Panc1 (cell line): ENCODE measurements at regions of chrX and their contacts with region 1.

Region 1: DNA sequence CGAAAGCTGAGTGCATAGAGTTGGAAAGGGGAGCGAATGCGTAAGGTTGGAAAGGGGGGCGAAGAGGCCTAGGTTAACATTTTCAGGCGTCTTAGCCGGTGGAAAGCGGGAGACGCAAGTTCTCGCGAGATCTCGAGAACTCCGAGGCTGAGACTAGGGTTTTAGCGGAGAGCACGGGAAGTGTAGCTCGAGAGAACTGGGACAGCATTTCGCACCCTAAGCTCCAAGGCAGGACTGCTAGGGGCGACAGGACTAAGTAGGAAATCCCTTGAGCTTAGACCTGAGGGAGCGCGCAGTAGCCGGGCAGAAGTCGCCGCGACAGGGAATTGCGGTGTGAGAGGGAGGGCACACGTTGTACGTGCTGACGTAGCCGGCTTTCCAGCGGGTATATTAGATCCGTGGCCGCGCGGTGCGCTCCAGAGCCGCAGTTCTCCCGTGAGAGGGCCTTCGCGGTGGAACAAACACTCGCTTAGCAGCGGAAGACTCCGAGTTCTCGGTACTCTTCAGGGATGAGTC is at the start of gene DDX3X:
- DNase-seq: peak; percentile 64
- ATAC-seq: peak; percentile 69
- H3K4me3 ChIP-seq: peak within 1 kb of the TSS; percentile 60 to 78
- H3K27ac ChIP-seq: peak within 1 kb of the TSS; percentile 97
- H3K4me1 ChIP-seq: peaks cover 11% of the 10 kb centered on the region
- H3K27me3 ChIP-seq: no peaks in the 10 kb centered on the region
- CTCF ChIP-seq: no peak
- total RNA-seq, gene DDX3X: 266 TPM

Region 2: DNA sequence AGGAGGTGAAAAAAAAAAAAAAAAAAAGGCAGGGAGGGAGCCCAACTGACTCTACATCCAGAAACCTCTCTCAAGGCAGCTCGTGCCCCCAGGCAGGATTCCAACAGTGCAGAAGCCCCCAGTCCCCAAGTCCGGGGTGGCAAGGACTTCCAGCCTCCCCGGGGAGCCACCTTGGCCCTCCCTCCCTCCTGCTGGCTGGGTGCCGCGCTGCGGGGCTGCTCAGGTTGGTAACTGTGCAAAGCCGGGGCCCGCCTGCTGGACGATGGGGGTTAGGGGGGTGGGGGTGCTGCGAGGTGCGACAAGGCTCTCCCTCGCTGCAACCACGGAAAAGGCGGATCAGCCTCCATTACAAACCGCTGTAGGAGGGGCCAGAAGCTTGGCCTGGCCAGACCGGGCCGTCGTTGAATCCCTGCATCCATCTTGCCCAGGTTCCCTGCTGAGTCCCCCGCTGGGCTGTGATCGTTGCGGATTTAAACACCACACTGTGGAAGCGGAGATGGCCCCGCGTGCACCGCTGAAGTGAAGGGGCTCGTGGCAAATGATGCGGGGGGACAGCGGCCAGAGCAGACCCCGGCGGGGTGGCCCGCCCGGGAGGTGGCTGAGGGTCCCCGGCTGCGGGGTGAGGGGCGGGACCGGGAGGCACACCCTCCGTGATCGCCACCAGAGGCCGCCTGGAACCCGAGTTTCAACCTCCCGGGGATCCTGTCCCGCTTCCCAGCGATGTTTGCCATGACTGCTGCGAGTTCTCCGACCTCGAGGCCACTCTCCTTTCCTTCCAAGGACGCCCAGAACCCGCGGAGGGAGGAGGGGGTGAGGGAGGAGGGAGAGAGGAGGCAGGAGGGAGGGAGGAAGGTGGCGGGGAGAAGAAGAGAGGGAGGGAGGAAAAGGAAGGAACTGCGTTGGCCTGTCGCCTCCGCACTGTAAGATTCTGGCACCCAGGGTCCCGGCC is 57.9 kb before region 1 on chrX:
- CTCF ChIA-PET with region 1: interaction called, 9 read pairs
- POLR2A ChIA-PET with region 1: no interaction called
- in situ Hi-C with region 1: no loop called
- intact Hi-C with region 1: loop called (anchors 10 kb)
- DNase-seq: no peak
- ATAC-seq: peak; percentile 96
- H3K4me3 ChIP-seq: peak overlapping the region; percentile 45 to 49
- H3K27ac ChIP-seq: peak overlapping the region; percentile 79; the same call in 1 of the 2 replicates
- H3K4me1 ChIP-seq: no peaks in the 10 kb centered on the region; the same call in 1 of the 2 replicates
- H3K27me3 ChIP-seq: no peaks in the 10 kb centered on the region
- CTCF ChIP-seq: peak; percentile 73; the same call in 1 of the 2 replicates

Region 3: DNA sequence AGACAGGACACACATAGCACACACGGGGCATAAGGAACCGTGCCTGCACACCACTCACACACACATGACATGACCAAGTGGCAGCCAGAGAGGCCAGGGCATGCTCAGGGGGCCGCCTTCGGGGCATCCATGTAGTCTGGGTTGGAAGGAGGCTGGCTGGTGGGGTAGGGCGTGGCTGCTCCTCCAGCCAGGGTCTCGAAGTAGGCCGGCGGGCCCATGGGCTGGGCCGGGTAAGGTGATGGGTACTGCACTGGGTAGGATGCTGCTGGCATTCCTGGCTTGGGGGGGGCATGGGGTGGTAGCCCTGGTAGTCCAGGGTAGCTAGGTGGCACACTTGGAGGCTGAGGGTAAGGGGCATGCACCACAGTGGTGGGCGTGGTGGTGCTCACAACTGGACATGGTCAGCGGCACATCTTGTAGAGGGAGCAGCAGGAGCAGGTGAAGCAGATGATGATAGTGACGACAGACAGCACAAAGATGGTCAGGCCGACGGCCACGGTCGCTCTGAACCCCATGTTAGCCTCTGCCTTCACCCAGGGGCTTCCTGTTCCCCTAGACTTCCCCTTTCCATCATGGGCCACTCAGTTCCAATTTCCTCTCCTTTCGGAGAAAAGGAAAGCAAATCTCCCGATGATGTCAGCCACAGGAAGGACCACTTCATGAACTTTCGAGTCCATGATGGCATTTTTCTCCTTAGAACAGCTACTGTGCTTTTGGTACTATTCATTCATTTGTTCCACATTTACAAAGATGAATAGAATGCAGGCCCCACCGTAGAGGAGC is 10.8 kb before region 1 on chrX:
- CTCF ChIA-PET with region 1: no interaction called
- POLR2A ChIA-PET with region 1: interaction called, 12 read pairs
- in situ Hi-C with region 1: no loop called
- intact Hi-C with region 1: no loop called
- DNase-seq: no peak
- ATAC-seq: no peak
- H3K4me3 ChIP-seq: no peak overlapping the region
- H3K27ac ChIP-seq: no peak overlapping the region
- H3K4me1 ChIP-seq: no peaks in the 10 kb centered on the region
- H3K27me3 ChIP-seq: no peaks in the 10 kb centered on the region
- CTCF ChIP-seq: no peak

Region 4: GRCh38 chrX:41441934-41442823 is 108.4 kb after region 1 on chrX:
- CTCF ChIA-PET with region 1: no interaction called
- POLR2A ChIA-PET with region 1: no interaction called
- in situ Hi-C with region 1: no loop called
- intact Hi-C with region 1: loop called (anchors 5 kb)
- DNase-seq: peak; percentile 45
- ATAC-seq: peak; percentile 95
- H3K4me3 ChIP-seq: peak overlapping the region; percentile 38 to 42
- H3K27ac ChIP-seq: peak overlapping the region; percentile 70
- H3K4me1 ChIP-seq: peaks cover 3% of the 10 kb centered on the region; the same call in 1 of the 2 replicates
- H3K27me3 ChIP-seq: no peaks in the 10 kb centered on the region
- CTCF ChIP-seq: peak; percentile 84

Region 5: DNA sequence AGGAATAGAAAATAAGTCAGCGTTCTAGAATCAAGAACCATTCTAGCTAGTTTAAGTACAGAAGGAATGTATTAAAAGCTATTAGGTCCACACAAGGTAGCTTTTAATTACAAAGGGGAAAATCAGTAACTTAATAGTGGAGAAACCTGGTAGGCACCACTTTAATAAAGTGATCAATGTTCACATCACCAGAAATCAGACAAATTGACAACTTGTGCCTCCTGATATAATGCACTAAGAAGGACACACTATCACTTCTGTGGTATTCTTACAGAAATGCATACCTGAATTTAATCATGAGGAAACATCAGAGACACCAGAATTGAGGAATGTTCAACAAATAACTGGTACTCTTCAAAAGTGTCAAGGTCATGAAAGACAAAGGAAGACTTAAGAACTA is 168.2 kb after region 1 on chrX:
- CTCF ChIA-PET with region 1: no interaction called
- POLR2A ChIA-PET with region 1: interaction called, 11 read pairs
- in situ Hi-C with region 1: no loop called
- intact Hi-C with region 1: no loop called
- DNase-seq: no peak
- ATAC-seq: no peak
- H3K4me3 ChIP-seq: no peak overlapping the region
- H3K27ac ChIP-seq: no peak overlapping the region
- H3K4me1 ChIP-seq: no peaks in the 10 kb centered on the region
- H3K27me3 ChIP-seq: no peaks in the 10 kb centered on the region
- CTCF ChIP-seq: no peak